AG04450 (cell line): ENCODE measurements at regions of chr1 and their contacts with region 1.

Region 1: DNA sequence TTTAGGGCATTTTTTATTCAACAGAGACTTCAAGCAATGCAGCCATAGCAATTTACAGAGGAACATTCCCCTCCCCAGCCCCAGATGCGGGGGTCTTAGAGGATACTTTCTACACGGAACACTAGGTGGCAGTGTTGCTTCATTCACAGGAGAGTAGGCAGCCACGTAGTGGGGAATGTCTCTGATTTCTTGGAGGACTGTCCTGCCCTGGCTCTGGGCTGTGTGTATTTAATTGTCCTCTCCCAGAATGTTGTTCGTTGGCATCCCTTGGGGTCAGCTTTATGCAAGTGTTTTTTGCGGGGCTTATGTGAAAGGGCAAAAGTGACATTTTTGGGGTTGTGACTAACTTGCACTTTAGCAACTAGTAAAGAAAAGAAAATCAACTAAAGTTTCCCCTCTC is 96.9 kb downstream of the PAPPA2 start:
- DNase-seq: peak; percentile 3
- H3K4me3 ChIP-seq: no peak overlapping the region
- H3K27ac ChIP-seq: no peak overlapping the region
- H3K27me3 ChIP-seq: no peaks in the 10 kb centered on the region
- CTCF ChIP-seq: peak; percentile 77

Region 2: DNA sequence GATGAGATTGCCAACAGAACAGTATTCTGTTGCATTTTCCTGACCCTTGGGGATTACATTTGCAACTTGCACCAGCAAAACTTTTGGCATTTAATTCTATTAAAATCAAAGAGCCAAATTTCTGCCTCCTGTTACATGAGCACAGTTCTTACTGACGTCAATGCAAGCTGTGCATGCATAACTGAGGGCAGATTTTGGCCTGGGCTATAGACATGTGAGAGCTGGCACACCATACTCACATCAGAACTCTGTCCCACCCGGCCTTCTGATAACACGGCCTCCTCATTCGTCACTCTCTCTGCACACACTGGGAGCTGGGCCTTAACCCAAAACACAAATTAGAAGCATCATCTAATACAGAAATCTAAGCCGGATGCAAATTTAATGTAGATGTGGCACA is 65.4 kb before region 1 on chr1:
- CTCF ChIA-PET with region 1: no interaction called
- POLR2A ChIA-PET with region 1: no interaction called
- DNase-seq: no peak
- H3K4me3 ChIP-seq: no peak overlapping the region
- H3K27ac ChIP-seq: no peak overlapping the region
- H3K27me3 ChIP-seq: no peaks in the 10 kb centered on the region
- CTCF ChIP-seq: no peak

Region 3: DNA sequence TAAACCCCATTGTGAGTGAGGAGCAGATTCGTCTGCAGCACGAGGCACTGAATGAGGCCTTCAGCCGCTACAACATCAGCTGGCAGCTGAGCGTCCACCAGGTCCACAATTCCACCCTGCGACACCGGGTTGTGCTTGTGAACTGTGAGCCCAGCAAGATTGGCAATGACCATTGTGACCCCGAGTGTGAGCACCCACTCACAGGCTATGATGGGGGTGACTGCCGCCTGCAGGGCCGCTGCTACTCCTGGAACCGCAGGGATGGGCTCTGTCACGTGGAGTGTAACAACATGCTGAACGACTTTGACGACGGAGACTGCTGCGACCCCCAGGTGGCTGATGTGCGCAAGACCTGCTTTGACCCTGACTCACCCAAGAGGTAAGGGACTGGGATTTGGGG is 35.3 kb after region 1 on chr1:
- CTCF ChIA-PET with region 1: no interaction called
- POLR2A ChIA-PET with region 1: no interaction called
- DNase-seq: no peak
- H3K4me3 ChIP-seq: no peak overlapping the region
- H3K27ac ChIP-seq: no peak overlapping the region
- H3K27me3 ChIP-seq: no peaks in the 10 kb centered on the region
- CTCF ChIP-seq: no peak

Region 4: GRCh38 chr1:176691251-176692228 is 131.7 kb after region 1 on chr1:
- CTCF ChIA-PET with region 1: interaction called, 31 read pairs
- POLR2A ChIA-PET with region 1: no interaction called
- DNase-seq: peak; percentile 6
- H3K4me3 ChIP-seq: no peak overlapping the region
- H3K27ac ChIP-seq: no peak overlapping the region
- H3K27me3 ChIP-seq: no peaks in the 10 kb centered on the region
- CTCF ChIP-seq: peak; percentile 69

Region 5: DNA sequence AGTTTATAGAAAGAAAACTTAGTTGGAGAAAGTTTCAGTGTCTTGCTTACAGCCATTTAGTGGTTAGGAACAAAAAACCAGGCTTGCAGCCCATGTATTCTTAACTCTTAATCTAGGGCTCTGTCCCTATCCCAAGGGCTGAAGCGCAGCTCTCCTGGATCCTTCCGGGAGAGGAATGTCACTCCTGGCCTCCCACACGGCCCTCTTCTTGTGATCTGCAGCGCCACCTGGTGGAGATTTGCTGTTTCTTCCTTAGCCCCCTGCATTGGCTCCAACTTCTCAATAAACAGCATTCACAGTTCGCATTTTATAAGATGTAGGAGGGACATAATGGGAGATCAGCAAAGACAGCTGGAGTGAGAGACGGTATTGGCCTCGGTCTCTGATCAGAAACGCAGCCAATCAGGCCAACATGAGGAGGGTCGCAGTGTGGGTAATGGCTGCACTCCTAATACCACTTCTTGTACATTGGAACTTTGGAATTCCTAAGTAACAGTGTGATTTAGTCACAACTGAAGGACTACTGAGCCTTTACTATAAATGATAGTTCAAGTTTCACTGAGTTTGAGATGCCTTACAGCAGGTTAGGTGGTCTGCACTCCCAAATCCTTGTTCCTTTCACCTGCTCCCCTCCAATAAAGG is 321.2 kb after region 1 on chr1:
- CTCF ChIA-PET with region 1: interaction called, 21 read pairs
- POLR2A ChIA-PET with region 1: no interaction called
- DNase-seq: peak; percentile 45
- H3K4me3 ChIP-seq: no peak overlapping the region
- H3K27ac ChIP-seq: no peak overlapping the region
- H3K27me3 ChIP-seq: no peaks in the 10 kb centered on the region
- CTCF ChIP-seq: peak; percentile 83